AG04450 (cell line): ENCODE measurements at regions of chr20 and their contacts with region 1.

Region 1: DNA sequence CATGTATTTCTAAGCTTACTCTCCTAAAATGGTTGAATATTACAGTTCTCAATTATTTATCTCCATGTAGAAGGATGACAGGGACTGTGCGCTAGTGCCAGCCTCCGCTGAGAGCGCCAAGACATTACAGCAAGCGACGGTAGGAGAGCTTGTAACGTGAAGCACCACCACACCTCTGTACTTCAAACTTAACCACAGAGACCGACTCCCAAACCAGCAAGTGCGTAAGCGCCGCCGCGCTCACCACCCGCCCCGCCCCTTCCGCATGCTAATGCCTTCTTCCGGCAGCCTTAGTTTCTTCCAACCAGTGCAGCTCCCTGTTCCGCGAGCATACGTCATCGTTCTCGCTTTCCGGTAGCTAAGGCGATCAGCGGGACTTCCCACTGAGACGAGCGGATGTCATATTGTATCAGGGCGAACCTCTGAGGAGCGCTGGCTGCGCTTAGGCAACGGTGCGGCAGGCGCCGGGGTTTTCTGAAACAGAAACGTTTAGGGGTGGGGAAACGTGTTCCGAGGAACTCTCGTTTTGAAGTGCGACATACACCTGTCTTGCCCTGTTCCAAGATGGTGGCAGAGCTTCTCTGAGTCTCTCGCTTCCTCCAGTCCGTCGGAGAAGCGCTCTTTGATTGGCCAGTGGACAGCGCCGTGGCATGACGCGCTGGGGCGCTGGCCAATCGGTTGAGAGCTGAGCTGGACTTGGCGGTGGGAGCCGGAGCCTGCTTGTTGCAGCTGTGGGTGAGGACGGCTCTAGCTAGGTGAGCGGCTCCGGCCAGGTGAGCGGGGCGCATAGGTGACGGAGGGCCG is at the start of gene SEC23B:
- DNase-seq: peak; percentile 92
- H3K4me3 ChIP-seq: peak within 1 kb of the TSS; percentile 90
- H3K27ac ChIP-seq: peak within 1 kb of the TSS; percentile 98
- H3K27me3 ChIP-seq: no peaks in the 10 kb centered on the region
- CTCF ChIP-seq: no peak
- polyA plus RNA-seq, gene SEC23B: 57.5 and 58.2 TPM in 2 replicates

Region 2: GRCh38 chr20:18466894-18467730 is 40.3 kb before region 1 on chr20 and contains the starts of genes DZANK1 and POLR3F:
- CTCF ChIA-PET with region 1: no interaction called
- POLR2A ChIA-PET with region 1: interaction called, 18 read pairs
- DNase-seq: peak; percentile 90
- H3K4me3 ChIP-seq: peak within 1 kb of the TSS; percentile 88
- H3K27ac ChIP-seq: peak within 1 kb of the TSS; percentile 94
- H3K27me3 ChIP-seq: no peaks in the 10 kb centered on the region
- CTCF ChIP-seq: no peak
- polyA plus RNA-seq, gene DZANK1: 1.8 TPM in 2 replicates
- polyA plus RNA-seq, gene POLR3F: 7.2 and 10.6 TPM in 2 replicates

Region 3: GRCh38 chr20:18496740-18497592 is 10.5 kb before region 1 on chr20 and contains the start of gene RBBP9:
- CTCF ChIA-PET with region 1: interaction called, 8 read pairs
- POLR2A ChIA-PET with region 1: interaction called, 21 read pairs
- DNase-seq: peak; percentile 36
- H3K4me3 ChIP-seq: peak within 1 kb of the TSS; percentile 93
- H3K27ac ChIP-seq: peak within 1 kb of the TSS; percentile 24
- H3K27me3 ChIP-seq: no peaks in the 10 kb centered on the region
- CTCF ChIP-seq: no peak
- polyA plus RNA-seq, gene RBBP9: 14.5 and 19.7 TPM in 2 replicates